Aorta (tissue), 5 donors: ENCODE measurements at regions of chr4 and their contacts with region 1.

Region 1: DNA sequence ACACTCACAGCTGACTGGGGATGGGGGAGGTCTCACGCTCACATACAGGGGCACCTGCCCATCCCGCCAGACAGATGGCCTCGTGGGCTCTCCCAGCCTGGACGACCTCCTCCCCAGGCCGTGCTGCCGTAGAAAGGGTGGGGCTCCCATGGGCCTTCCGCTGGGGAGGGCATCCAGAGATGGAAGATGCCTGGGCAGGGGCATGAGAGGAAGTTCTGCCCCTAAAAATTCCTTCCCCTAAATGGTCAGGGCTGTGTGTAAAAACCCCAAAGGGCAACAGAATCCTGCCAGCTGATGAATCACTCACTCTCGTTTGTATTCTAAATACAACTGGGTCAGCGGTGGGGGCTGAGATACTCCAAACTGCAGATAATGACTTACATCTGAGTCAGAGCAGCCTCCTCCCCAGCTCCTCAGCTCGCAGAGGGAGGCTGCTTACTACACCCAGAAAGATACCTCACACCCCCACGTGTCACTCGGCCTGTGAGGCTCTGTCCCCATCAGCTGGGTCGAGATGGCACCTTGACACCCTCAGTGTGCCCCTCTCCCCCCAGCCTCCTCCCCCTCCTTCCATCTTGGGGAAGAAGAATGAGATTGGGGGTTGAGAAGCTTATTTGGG is 10.1 kb downstream of the WDR1 start:
- DNase-seq: peak; percentile 88 to 90
- ATAC-seq: peak; percentile 91
- H3K4me3 ChIP-seq: no peak overlapping the region
- H3K27ac ChIP-seq: peak overlapping the region; percentile 62 to 74
- H3K4me1 ChIP-seq: peaks cover 5 to 22% of the 10 kb centered on the region in 2 donors
- H3K27me3 ChIP-seq: no peaks in the 10 kb centered on the region

Region 2: GRCh38 chr4:10074767-10075105 is 31.8 kb before region 1 on chr4:
- intact Hi-C with region 1: loop called in 1 of 2 experiments (anchors 5 kb)
- DNase-seq: no peak
- ATAC-seq: no peak
- H3K4me3 ChIP-seq: no peak overlapping the region
- H3K27ac ChIP-seq: no peak overlapping the region
- H3K4me1 ChIP-seq: no peaks in the 10 kb centered on the region
- H3K27me3 ChIP-seq: no peaks in the 10 kb centered on the region

Region 3: DNA sequence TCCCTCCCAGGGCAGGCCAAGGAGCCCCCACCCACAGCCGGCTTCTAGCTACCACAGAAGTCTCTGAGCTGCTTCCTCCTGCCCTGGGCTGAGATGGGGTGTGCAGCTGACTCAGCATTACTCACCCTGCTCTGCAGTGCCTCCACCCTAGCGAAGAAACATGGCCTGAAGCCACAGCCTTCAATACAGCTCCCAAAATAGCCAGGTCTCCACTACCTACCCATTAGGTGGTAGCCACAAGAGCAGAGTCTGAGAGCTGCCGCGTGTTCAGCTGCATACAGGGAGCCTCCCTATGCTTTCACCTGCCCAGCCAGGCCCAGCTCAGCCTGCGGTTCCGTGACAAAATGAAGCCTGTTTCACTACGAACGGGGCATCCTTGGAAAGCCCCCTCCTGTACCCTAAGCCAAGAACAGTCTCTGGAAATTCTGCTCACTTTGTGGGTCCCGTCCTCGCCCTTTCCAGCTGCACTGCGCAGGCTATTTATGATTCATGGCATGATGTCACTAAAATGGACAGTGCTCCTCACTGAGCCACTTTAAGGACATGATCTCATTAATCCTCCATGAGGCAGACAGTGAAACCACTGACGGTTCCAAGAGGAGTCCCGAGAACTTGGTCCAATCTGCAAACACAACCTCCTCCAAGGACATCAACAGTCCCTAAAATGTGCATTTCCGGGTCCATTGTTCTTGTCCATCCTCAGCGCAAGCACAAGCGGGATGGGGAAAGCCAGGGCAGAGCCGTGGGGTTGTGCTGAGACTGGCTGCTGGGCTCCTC is 10.1 kb before region 1 on chr4:
- intact Hi-C with region 1: loop called in 1 of 2 experiments (anchors 2 kb)
- DNase-seq: peak in 1 of 2 donors; percentile 94
- ATAC-seq: peak; percentile 81
- H3K4me3 ChIP-seq: no peak overlapping the region
- H3K27ac ChIP-seq: peak overlapping the region; percentile 53 to 72
- H3K4me1 ChIP-seq: peaks cover 0 to 5% of the 10 kb centered on the region in 2 donors
- H3K27me3 ChIP-seq: no peaks in the 10 kb centered on the region

Region 4: DNA sequence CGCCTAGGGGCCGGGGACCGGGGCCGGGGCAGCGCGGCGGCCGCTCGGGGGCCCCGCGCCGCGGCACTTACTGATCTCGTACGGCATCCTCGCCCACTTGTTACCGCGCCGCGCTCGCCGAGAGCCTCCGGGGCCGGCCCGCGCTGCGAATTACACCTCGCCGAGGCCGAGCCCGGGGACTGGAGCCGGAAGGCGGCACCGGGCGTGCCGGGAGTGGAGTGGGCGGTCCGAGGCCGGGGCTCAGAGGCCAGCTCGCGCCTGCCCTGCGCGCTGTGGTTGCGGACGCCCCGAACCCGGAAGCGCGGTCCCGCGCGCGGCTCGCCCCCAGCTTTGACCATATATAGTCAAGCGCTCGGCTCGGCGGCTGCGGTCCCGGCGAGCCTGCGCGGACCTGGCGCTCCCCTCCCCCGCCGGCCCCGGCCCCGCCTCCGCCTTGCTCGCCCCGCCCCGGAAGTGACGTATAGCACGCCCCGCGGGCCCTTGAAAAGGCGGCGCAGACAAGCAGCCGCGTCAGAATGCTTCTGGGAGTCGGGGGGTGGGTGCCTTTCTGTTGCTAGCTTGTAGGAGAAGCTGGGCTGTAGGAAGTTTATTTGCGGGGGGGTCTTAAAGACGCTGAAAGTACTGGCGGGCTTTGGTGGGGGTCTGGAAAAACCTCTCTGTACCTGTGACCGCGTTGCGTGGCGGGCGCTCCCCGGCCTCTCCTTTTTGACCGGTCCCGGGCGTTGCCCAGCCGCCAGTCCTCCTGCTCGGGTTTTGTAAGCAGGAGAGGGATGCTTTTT is 10.2 kb after region 1 on chr4 and contains the start of gene WDR1:
- intact Hi-C with region 1: loop called in 1 of 2 experiments (anchors 1 kb)
- DNase-seq: peak; percentile 99
- ATAC-seq: peak; percentile 97
- H3K4me3 ChIP-seq: peak within 1 kb of the TSS; percentile 94 to 96
- H3K27ac ChIP-seq: peak within 1 kb of the TSS; percentile 91 to 94
- H3K4me1 ChIP-seq: peaks cover 5% of the 10 kb centered on the region in 2 donors
- H3K27me3 ChIP-seq: no peaks in the 10 kb centered on the region
- total RNA-seq, gene WDR1: 339 to 593 TPM